Endothelial cell of umbilical vein (primary cell): ENCODE measurements at regions of chr14 and their contacts with region 1.

Region 1: DNA sequence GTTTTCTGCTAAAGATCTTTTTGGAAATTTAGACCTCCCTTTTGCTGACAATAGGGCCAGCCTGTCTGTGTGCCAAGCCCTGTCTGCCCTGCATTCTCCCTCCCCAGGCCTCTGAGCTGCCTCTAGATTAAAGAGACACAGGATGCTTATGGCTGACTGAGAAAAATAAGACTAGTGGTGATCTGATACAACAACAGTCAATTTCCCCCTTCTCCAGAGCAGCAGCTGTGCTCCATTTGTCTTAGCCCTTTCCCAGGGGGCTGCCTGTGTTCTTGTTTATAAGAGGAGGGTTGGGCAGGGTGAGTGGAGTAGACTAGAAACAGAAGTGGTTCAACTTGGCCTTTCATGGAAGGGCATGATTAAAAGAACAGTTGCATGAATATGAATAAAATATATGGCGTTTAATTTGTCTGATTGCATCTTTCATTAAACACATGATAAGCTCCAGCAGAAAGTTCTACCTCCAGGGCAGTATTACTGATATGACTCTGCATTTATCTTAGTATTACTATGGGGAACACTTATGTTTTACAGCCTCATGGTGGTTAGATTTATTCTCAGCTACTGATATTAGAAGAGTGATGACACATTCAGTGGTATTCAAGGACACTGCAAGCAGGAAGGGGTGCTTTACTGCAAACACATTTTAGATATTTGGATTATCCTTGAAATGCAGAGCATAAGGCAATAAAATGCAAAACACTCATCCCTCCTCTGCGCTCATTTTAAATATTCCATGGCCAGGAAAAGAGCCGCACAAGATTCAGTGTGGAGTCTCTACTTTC is 150.2 kb upstream of the CLEC14A start:
- DNase-seq: peak; percentile 54
- H3K4me3 ChIP-seq: no peak overlapping the region
- H3K27ac ChIP-seq: peak overlapping the region; percentile 69
- H3K4me1 ChIP-seq: peaks cover 53% of the 10 kb centered on the region
- H3K27me3 ChIP-seq: no peaks in the 10 kb centered on the region
- CTCF ChIP-seq: no peak
- POLR2A ChIP-seq: no peak

Region 2: DNA sequence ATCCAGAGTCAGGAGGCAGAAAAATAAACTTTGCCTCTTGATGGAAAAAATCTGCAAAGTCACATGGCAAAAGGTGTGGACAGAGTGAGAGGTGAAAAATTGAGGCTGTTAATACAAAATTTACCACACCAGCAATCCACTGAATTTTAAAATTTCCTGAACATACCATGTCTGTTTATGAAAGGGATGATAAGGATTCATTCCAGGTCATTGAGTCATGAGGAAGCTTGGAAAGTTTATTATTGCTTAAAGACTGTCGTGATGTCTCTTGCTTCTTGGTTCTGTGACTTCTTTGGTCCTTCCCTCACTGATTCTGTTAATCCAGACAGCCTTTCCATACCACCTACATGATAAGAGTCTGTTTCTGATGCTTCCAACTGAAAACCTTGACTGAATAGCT is 737.4 kb before region 1 on chr14:
- CTCF ChIA-PET with region 1: no interaction called
- POLR2A ChIA-PET with region 1: no interaction called
- dilution Hi-C with region 1: no loop called
- intact Hi-C with region 1: no loop called
- DNase-seq: no peak
- H3K4me3 ChIP-seq: no peak overlapping the region
- H3K27ac ChIP-seq: no peak overlapping the region
- H3K4me1 ChIP-seq: no peaks in the 10 kb centered on the region
- H3K27me3 ChIP-seq: peaks cover 0 to 11% of the 10 kb centered on the region in 2 experiments
- CTCF ChIP-seq: no peak
- POLR2A ChIP-seq: no peak

Region 3: GRCh38 chr14:38208618-38209562 is 197.2 kb before region 1 on chr14:
- CTCF ChIA-PET with region 1: no interaction called
- POLR2A ChIA-PET with region 1: no interaction called
- dilution Hi-C with region 1: no loop called
- intact Hi-C with region 1: loop called (anchors 5 kb)
- DNase-seq: peak; percentile 47
- H3K4me3 ChIP-seq: peak overlapping the region; percentile 34 to 58 (median 44)
- H3K27ac ChIP-seq: no peak overlapping the region
- H3K4me1 ChIP-seq: peaks cover 36% of the 10 kb centered on the region
- H3K27me3 ChIP-seq: no peaks in the 10 kb centered on the region
- CTCF ChIP-seq: peak in 1 of 2 donors; percentile 48
- POLR2A ChIP-seq: no peak

Region 4: GRCh38 chr14:38309522-38310277 is 96.3 kb before region 1 on chr14:
- CTCF ChIA-PET with region 1: no interaction called
- POLR2A ChIA-PET with region 1: no interaction called
- dilution Hi-C with region 1: no loop called
- intact Hi-C with region 1: loop called (anchors 1 kb)
- DNase-seq: no peak
- H3K4me3 ChIP-seq: peak overlapping the region in 1 of 3 experiments; percentile 23
- H3K27ac ChIP-seq: peak overlapping the region; percentile 74
- H3K4me1 ChIP-seq: peaks cover 40% of the 10 kb centered on the region
- H3K27me3 ChIP-seq: no peaks in the 10 kb centered on the region
- CTCF ChIP-seq: no peak
- POLR2A ChIP-seq: no peak

Region 5: DNA sequence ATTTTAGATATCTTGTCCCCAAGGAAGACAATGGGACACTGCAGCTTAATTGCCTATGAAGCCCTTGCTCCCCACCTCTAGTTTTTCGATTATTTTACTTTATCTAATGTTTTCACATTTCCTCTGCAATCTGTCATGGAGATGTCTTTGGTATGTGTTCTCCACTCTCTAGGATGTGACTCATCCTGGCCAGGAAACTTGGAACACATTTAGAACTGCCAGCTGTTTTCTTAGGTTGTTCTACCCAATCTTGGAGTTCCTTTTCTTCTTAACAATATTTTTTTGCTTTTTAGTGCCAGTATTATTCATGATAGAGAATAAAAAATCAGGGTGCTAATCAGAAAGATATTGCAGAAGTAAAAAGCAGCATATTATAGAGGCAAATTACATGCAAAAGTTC is 48.5 kb before region 1 on chr14:
- CTCF ChIA-PET with region 1: interaction called, 8 read pairs
- POLR2A ChIA-PET with region 1: no interaction called
- dilution Hi-C with region 1: no loop called
- intact Hi-C with region 1: loop called (anchors 2 kb)
- DNase-seq: peak; percentile 97
- H3K4me3 ChIP-seq: peak overlapping the region in 1 of 3 experiments; percentile 19
- H3K27ac ChIP-seq: peak overlapping the region; percentile 76
- H3K4me1 ChIP-seq: peaks cover 36% of the 10 kb centered on the region
- H3K27me3 ChIP-seq: no peaks in the 10 kb centered on the region
- CTCF ChIP-seq: no peak
- POLR2A ChIP-seq: peak; percentile 78

Region 6: DNA sequence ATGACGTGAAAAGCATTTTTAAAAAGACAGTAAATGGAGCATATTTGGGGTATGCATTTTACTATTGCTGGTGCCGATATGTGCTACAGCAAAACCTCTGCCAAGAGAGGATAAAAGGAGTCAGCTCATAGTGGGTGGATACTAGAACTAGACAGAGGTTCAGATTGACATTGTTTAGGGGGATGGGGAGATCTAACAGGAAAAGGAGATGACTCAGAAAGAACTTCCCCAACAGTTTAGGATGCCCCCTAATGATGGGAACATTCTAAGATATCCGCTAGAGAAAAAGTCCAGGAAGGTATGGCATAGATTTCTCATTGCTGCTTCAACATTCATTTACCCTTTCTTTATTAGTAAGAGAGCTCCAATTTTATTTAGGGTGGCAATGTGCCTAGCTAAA is 39.7 kb before region 1 on chr14:
- CTCF ChIA-PET with region 1: interaction called, 14 read pairs
- POLR2A ChIA-PET with region 1: no interaction called
- dilution Hi-C with region 1: no loop called
- intact Hi-C with region 1: loop called (anchors 1 kb)
- DNase-seq: peak; percentile 65
- H3K4me3 ChIP-seq: no peak overlapping the region
- H3K27ac ChIP-seq: peak overlapping the region; percentile 65
- H3K4me1 ChIP-seq: peaks cover 39% of the 10 kb centered on the region
- H3K27me3 ChIP-seq: no peaks in the 10 kb centered on the region
- CTCF ChIP-seq: no peak
- POLR2A ChIP-seq: no peak

Region 7: GRCh38 chr14:38420048-38420447 is 14.0 kb after region 1 on chr14:
- CTCF ChIA-PET with region 1: interaction called, 11 read pairs
- POLR2A ChIA-PET with region 1: no interaction called
- dilution Hi-C with region 1: no loop called
- intact Hi-C with region 1: no loop called
- DNase-seq: no peak
- H3K4me3 ChIP-seq: no peak overlapping the region
- H3K27ac ChIP-seq: no peak overlapping the region
- H3K4me1 ChIP-seq: peaks cover 6% of the 10 kb centered on the region
- H3K27me3 ChIP-seq: no peaks in the 10 kb centered on the region
- CTCF ChIP-seq: no peak
- POLR2A ChIP-seq: no peak

Region 8: DNA sequence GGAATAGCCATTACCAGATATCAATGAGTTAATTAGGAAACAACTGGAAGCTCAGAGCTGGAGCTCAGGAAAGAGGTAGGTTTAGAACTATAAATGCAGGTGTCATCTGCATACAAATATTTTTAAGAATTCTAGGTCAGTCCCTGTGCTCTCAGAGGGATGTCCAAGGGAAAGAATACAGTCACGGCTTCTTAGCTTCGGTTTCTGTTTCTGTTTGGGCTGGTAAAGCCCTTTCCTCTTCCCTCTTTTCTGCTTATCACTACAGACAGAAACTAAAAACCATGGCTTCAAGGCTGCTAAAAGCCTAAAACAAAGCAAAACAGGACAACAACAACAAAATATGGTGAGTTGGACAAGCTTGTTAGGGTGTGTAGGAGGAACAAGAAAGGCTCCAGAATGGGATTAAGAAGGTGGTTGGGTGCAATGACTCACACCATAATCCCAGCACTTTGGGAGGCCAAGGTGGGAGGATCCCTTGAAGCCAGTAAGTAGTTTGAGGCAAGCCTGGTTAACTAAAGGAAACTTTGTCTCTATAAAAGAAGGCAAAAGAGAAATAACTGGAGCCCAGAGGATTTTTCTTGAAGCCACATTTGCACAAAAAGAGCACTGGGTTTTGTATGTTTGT is 584.0 kb after region 1 on chr14:
- CTCF ChIA-PET with region 1: interaction called, 3 read pairs
- POLR2A ChIA-PET with region 1: no interaction called
- dilution Hi-C with region 1: no loop called
- intact Hi-C with region 1: loop called (anchors 10 kb)
- DNase-seq: peak; percentile 15
- H3K4me3 ChIP-seq: no peak overlapping the region
- H3K27ac ChIP-seq: no peak overlapping the region
- H3K4me1 ChIP-seq: peaks cover 38% of the 10 kb centered on the region
- H3K27me3 ChIP-seq: no peaks in the 10 kb centered on the region
- CTCF ChIP-seq: no peak
- POLR2A ChIP-seq: no peak